CD4-positive, alpha-beta T cell (primary cell): ENCODE measurements at regions of chr20 and their contacts with region 1.

Region 1: GRCh38 chr20:50165684-50166554 is 12.4 kb upstream of the PEDS1 start:
- DNase-seq: peak in 13 of 14 experiments; percentile 61 to 90 (median 75)
- ATAC-seq: peak; percentile 88
- H3K4me3 ChIP-seq: peak overlapping the region; percentile 24
- H3K4me3 Mint-ChIP-seq: peak overlapping the region; percentile 17
- H3K27ac ChIP-seq: no peak overlapping the region
- H3K27ac Mint-ChIP-seq: no peak overlapping the region
- H3K4me1 ChIP-seq: peaks cover 13% of the 10 kb centered on the region
- H3K4me1 Mint-ChIP-seq: peaks cover 16% of the 10 kb centered on the region
- H3K27me3 ChIP-seq: no peaks in the 10 kb centered on the region
- H3K27me3 Mint-ChIP-seq: peaks cover 11% of the 10 kb centered on the region
- CTCF ChIP-seq: no peak

Region 2: GRCh38 chr20:50070991-50071888 is 94.7 kb before region 1 on chr20:
- CTCF ChIA-PET with region 1: interaction called, 4 read pairs
- POLR2A ChIA-PET with region 1: interaction called, 3 read pairs
- intact Hi-C with region 1: loop called in 1 of 2 experiments (anchors 2 kb)
- DNase-seq: peak; percentile 71 to 98 (median 91)
- ATAC-seq: peak; percentile 100
- H3K4me3 ChIP-seq: peak overlapping the region; percentile 38
- H3K4me3 Mint-ChIP-seq: peak overlapping the region; percentile 60
- H3K27ac ChIP-seq: no peak overlapping the region
- H3K27ac Mint-ChIP-seq: no peak overlapping the region
- H3K4me1 ChIP-seq: peaks cover 14% of the 10 kb centered on the region
- H3K4me1 Mint-ChIP-seq: peaks cover 5% of the 10 kb centered on the region
- H3K27me3 ChIP-seq: no peaks in the 10 kb centered on the region
- H3K27me3 Mint-ChIP-seq: no peaks in the 10 kb centered on the region
- CTCF ChIP-seq: peak; percentile 99

Region 3: DNA sequence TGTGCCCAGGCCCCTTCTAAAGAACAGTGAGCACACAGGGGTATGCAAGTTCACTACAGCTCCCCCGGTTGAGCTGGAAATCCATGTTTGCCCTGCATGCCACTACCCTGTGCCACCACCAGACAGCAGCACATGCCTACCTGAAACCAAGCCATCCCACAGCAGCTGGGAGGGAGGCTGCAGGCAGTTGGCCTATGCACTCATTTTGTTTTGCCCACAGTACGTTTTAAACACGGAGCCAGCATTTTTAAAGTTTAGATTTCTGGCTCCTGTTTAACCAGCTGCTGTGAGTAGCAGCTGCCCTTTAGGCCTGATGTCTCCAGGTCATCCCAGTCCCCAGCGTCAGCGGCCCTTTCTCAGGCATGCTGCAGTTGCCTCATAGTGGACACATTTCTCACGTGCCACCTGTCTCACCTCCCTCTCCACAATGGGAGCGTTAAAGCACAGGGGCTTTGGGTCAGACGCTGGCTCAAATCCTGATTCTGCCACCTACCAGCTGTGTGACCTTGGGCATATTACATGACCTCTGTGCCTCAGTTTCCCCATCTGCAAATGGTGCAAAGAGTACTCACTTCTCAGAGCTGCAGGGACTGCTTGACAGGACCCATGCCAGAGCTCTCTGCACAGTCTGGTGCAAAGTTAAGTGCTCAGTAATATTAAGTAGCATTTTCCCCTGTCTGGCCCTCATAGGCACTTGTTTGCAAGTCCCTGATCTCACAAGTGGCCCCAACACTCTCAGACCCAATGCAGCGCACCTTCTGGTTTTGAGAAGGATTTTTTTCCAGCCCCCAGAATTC is 44.8 kb before region 1 on chr20:
- CTCF ChIA-PET with region 1: interaction called, 174 read pairs
- POLR2A ChIA-PET with region 1: interaction called, 30 read pairs
- intact Hi-C with region 1: loop called (anchors 1 kb)
- DNase-seq: peak; percentile 48 to 85 (median 62)
- ATAC-seq: peak; percentile 83
- H3K4me3 ChIP-seq: no peak overlapping the region
- H3K4me3 Mint-ChIP-seq: no peak overlapping the region
- H3K27ac ChIP-seq: no peak overlapping the region
- H3K27ac Mint-ChIP-seq: peak overlapping the region; percentile 17
- H3K4me1 ChIP-seq: peaks cover 9% of the 10 kb centered on the region
- H3K4me1 Mint-ChIP-seq: peaks cover 12% of the 10 kb centered on the region
- H3K27me3 ChIP-seq: no peaks in the 10 kb centered on the region
- H3K27me3 Mint-ChIP-seq: no peaks in the 10 kb centered on the region
- CTCF ChIP-seq: peak; percentile 74

Region 4: DNA sequence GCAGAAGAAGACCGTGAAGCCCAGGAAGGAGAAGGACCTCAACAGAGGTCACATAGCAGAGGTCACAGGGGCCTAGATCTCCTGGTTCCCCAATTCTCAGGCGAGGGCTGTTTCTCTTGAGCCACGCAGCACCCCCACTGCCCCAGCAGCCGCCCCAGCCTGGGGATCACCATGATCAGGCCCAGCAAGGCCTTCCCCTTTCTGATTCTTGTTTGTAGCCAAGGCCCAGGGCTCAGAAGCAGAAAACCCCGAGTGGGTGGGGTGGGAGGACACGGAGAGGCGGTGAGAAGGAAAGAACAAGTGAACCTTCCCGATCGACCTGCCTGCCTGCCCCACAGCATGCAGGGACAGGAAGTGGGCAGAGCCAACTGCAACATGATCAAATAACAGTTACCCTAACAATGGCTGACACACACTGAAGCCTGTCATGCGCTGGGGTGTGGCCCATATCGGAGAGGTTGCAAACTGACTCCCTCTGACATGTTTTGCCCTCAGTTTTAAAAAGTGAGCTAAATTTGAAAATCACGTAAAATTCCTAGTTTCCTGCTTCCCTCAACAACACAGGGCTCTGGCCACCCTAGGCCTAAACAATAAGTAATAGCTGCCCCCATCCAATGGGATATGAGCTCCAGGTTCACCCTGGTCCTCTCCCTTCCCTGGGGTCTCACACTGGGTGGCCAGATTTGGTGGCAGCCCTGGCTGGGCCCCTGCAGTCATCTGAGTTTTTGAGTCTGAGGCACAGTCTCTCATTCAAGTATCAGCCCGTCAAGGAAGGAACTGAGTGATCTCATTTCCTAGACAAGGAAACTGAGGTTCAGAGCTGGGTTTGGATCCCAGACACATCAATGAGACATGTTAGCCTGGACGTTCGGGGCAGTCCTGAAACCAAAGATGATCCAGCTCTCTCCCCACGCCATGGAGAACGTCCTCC is 18.9 kb before region 1 on chr20:
- CTCF ChIA-PET with region 1: interaction called, 19 read pairs
- POLR2A ChIA-PET with region 1: interaction called, 4 read pairs
- intact Hi-C with region 1: loop called in 1 of 2 experiments (anchors 1 kb)
- DNase-seq: peak; percentile 63 to 93 (median 75)
- ATAC-seq: peak; percentile 99
- H3K4me3 ChIP-seq: peak overlapping the region; percentile 45
- H3K4me3 Mint-ChIP-seq: peak overlapping the region; percentile 85
- H3K27ac ChIP-seq: peak overlapping the region; percentile 93
- H3K27ac Mint-ChIP-seq: peak overlapping the region; percentile 99
- H3K4me1 ChIP-seq: peaks cover 78% of the 10 kb centered on the region
- H3K4me1 Mint-ChIP-seq: peaks cover 70% of the 10 kb centered on the region
- H3K27me3 ChIP-seq: no peaks in the 10 kb centered on the region
- H3K27me3 Mint-ChIP-seq: no peaks in the 10 kb centered on the region
- CTCF ChIP-seq: no peak

Region 5: GRCh38 chr20:50179507-50180016 is 13.6 kb after region 1 on chr20:
- CTCF ChIA-PET with region 1: interaction called, 16 read pairs
- POLR2A ChIA-PET with region 1: no interaction called
- intact Hi-C with region 1: no loop called
- DNase-seq: no peak
- ATAC-seq: no peak
- H3K4me3 ChIP-seq: no peak overlapping the region
- H3K4me3 Mint-ChIP-seq: no peak overlapping the region
- H3K27ac ChIP-seq: no peak overlapping the region
- H3K27ac Mint-ChIP-seq: no peak overlapping the region
- H3K4me1 ChIP-seq: no peaks in the 10 kb centered on the region
- H3K4me1 Mint-ChIP-seq: no peaks in the 10 kb centered on the region
- H3K27me3 ChIP-seq: peaks cover 0 to 3% of the 10 kb centered on the region in 2 experiments
- H3K27me3 Mint-ChIP-seq: peaks cover 4% of the 10 kb centered on the region
- CTCF ChIP-seq: peak; percentile 39